PC-9 (cell line): ENCODE measurements at regions of chr10 and their contacts with region 1.

Region 1: GRCh38 chr10:14995964-14996565 is 36.9 kb downstream of the MEIG1 start:
- DNase-seq: no peak
- H3K4me3 ChIP-seq: no peak overlapping the region
- H3K27ac ChIP-seq: no peak overlapping the region
- H3K4me1 ChIP-seq: peaks cover 9% of the 10 kb centered on the region
- H3K27me3 ChIP-seq: no peaks in the 10 kb centered on the region
- CTCF ChIP-seq: no peak

Region 2: GRCh38 chr10:14884082-14884481 is 112.0 kb before region 1 on chr10:
- CTCF ChIA-PET with region 1: no interaction called
- POLR2A ChIA-PET with region 1: no interaction called
- intact Hi-C with region 1: no loop called
- DNase-seq: no peak
- H3K4me3 ChIP-seq: no peak overlapping the region
- H3K27ac ChIP-seq: no peak overlapping the region
- H3K4me1 ChIP-seq: peaks cover 15% of the 10 kb centered on the region
- H3K27me3 ChIP-seq: no peaks in the 10 kb centered on the region
- CTCF ChIP-seq: no peak

Region 3: DNA sequence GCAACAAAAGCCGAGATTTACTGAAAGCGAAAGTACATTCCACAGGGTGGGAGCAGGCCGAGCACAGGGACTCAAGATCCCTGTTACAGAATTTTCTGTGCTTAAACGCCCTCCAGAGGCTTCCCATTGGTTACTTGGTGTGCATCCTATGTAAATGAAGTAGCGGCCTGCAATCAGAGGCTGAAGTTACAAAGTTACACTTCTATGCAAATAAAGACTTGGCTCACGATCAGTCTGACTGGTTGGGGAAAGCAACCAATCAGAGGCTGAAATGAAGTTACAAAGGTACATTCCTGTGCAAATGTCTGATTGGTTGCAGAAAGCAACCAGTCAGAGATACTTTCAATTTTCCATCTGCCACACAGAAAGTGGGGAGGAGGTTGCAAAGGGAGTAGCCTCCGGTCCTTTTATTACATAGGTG is 88.4 kb after region 1 on chr10:
- CTCF ChIA-PET with region 1: no interaction called
- POLR2A ChIA-PET with region 1: no interaction called
- intact Hi-C with region 1: loop called (anchors 1 kb)
- DNase-seq: peak; percentile 75 to 96
- H3K4me3 ChIP-seq: peak overlapping the region; percentile 58
- H3K27ac ChIP-seq: peak overlapping the region; percentile 44
- H3K4me1 ChIP-seq: peaks cover 10% of the 10 kb centered on the region
- H3K27me3 ChIP-seq: no peaks in the 10 kb centered on the region
- CTCF ChIP-seq: no peak